ENCODE measurements at regions of chr11 and their contacts with region 1.

Region 1: DNA sequence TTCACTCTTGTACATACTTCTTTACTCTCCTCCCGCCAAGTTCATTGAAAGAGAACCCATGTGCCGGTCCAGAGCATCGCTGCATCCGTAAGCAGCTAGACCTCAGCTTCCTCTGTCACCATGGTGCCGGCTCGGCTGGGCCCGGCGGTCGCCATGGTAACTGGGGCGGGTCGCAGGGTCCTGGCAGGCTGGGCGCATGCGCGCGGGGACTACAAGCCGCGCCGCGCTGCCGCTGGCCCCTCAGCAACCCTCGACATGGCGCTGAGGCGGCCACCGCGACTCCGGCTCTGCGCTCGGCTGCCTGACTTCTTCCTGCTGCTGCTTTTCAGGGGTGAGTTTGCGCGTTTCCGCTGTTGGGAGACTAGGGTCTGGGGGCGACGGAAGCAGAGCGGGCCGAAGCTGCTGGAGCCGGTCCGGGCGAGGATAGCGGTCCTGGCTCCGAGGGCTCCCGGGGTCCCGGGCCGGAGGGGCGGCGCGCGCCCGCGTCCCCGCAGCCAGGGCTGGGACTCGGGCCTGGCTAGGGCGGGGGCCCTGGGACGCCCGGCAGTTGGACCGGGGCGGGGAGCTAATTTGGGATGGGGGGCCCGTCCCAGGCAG is at the start of gene JAM3:
- DNase-seq: peak; percentile 98
- ATAC-seq: peak; percentile 96
- H3K4me3 Mint-ChIP-seq: peak within 1 kb of the TSS; percentile 93
- H3K27ac Mint-ChIP-seq: peak within 1 kb of the TSS; percentile 83
- H3K4me1 Mint-ChIP-seq: peaks cover 22% of the 10 kb centered on the region
- H3K27me3 Mint-ChIP-seq: peaks cover 9% of the 10 kb centered on the region
- total RNA-seq, gene JAM3: 15.3 to 17.5 TPM

Region 2: DNA sequence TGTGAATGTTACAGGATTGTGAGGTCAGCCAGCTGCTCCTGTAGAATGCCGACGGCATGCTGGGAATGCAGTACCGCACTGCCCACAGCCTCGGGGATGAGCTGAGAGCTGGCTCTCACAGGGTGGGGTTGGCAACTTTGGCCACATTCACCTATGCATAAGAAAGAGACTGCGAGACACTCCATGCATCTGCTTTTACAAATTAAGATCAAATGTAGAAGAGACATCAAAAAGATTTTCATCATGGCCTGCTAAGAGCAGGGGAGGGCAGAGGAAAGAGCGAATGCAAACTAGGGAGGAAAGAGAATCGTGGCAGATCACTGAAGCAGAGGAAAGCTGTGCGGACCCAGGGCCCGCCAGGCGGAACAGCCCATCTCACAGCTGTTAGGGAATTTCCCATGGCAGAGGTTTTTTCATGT is 173.9 kb before region 1 on chr11:
- CTCF ChIA-PET with region 1: no interaction called
- POLR2A ChIA-PET with region 1: no interaction called
- intact Hi-C with region 1: no loop called
- DNase-seq: no peak
- ATAC-seq: no peak
- H3K4me3 Mint-ChIP-seq: no peak overlapping the region
- H3K27ac Mint-ChIP-seq: no peak overlapping the region
- H3K4me1 Mint-ChIP-seq: peaks cover 2% of the 10 kb centered on the region
- H3K27me3 Mint-ChIP-seq: peaks cover 7% of the 10 kb centered on the region

Region 3: DNA sequence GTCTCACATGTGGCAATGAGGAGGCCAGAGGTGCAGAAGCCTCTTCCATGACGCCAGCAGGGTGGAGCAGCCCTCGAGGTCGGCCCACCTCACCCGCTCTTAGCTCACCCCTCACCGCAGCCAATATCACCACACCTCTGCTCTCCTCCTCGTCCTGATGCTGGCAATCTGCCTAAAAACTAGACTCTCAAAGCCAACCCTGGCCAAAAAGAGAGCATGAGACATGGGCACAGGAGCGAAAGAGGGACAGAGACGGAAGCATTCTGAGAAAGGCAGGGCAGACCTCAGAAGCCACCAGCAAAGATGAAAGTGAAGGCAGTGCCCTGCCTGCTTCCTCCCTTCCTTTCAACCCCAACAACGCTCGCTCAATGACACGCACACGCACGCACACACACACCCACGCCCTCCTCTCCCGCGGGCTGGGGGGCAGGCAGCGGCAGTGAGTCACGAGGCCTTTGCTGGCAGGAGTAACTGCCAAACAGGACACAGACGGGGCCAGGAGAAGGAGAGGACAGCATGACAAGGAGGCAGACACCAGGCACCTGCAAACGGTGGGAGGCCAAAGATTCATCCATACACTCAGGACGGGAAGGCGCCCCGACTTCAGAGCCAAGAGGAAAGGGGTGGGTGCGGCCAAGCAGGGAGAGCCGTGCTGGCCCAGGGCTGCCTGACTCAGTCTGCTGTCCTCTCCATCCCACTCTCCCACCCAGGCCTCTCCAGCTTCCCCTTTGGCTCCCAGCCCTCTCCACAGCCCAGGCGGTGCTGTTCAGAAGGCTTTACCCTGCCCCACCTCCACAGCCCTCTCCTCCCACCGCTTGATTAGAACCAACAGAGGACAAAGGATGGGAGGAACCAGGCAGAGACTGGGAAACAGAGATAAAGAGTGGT is 123.6 kb before region 1 on chr11:
- CTCF ChIA-PET with region 1: no interaction called
- POLR2A ChIA-PET with region 1: no interaction called
- intact Hi-C with region 1: no loop called
- DNase-seq: peak; percentile 95
- ATAC-seq: peak; percentile 78
- H3K4me3 Mint-ChIP-seq: peak overlapping the region; percentile 79
- H3K27ac Mint-ChIP-seq: peak overlapping the region; percentile 96
- H3K4me1 Mint-ChIP-seq: peaks cover 74% of the 10 kb centered on the region
- H3K27me3 Mint-ChIP-seq: no peaks in the 10 kb centered on the region

Region 4: DNA sequence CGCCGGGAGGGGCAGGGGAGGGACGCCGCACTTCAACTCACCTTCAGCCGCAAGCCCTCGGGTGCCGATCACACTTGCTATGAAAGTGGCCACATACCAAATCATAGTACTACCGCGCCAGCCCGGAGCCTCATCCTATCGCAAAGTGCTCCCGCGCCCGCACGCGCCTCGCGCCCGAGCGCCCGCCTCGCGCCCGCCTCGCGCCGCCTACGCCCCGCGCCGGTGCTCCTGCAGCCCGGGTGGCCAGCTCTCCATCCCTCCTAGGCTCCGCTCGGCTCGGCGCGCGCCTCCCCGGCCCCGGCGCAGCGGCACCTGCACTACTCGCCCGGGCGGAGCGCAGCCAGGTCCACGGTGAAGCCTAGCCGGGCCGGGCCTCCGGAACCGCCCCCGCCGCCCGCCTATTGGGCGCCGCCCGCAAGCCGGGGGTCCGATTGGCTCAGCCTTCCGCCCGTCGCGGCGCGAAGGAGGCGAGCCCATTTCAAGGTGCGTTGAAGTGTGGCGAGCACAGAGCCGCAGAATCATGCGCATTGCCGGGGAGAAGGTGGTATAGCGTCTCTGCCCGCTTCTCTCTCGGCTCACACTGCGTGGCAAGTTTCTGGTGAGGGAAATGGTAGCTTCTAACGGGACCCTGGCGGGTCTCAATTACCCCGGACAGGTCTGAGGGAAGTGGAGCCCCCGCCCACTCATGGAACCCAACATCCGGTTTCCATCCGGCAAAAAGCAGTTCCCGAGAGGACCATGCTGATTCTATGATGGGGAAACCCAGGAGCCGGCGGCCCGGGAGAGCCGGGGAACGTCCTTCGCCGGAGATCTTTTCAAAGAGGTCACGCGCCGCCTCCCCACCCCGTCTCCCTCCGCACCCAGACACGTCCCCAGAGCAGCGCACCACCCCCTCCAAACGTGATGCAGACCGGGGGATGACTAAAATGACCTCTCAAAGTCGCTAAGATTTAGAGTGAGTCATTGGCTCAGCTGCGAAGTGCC is 112.0 kb before region 1 on chr11 and contains the start of gene IGSF9B:
- CTCF ChIA-PET with region 1: interaction called, 3 read pairs
- POLR2A ChIA-PET with region 1: no interaction called
- intact Hi-C with region 1: loop called in 1 of 2 experiments (anchors 1 kb)
- DNase-seq: peak; percentile 95
- ATAC-seq: peak; percentile 91
- H3K4me3 Mint-ChIP-seq: peak within 1 kb of the TSS; percentile 90
- H3K27ac Mint-ChIP-seq: peak within 1 kb of the TSS; percentile 87
- H3K4me1 Mint-ChIP-seq: peaks cover 49% of the 10 kb centered on the region
- H3K27me3 Mint-ChIP-seq: peaks cover 9% of the 10 kb centered on the region
- total RNA-seq, gene IGSF9B: 79.0 to 84.2 TPM

Region 5: DNA sequence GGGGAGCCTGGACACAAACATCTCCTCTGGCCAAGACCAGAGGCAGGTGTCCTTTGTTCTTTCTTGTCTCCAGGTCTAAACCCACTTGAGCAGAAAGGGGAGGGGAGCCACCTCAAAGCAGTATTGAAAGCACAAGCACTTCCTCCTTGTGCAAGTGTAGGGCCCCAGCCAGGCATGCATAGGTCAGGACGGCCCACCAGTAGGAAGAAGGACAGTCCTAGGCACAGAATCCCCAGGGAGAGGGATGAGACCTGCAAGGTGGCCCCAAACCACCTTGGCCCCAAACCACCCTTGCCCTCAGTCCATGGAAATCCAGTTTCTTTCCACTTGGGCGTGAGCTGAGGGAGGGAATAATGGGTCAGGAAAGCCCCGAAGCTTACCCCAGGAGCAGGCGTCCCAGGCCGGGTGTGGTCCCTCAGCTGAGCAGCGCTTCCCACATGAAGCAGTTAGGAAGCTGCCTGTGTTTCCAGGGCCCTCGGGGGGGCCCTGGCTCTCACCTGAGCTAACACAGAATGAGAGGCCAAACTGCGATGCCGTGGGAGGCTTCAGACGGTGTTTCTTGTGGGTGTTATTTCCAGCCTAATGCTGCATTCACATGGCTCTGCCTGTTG is 91.8 kb before region 1 on chr11:
- CTCF ChIA-PET with region 1: no interaction called
- POLR2A ChIA-PET with region 1: no interaction called
- intact Hi-C with region 1: no loop called
- DNase-seq: no peak
- ATAC-seq: peak; percentile 65
- H3K4me3 Mint-ChIP-seq: no peak overlapping the region
- H3K27ac Mint-ChIP-seq: no peak overlapping the region
- H3K4me1 Mint-ChIP-seq: no peaks in the 10 kb centered on the region
- H3K27me3 Mint-ChIP-seq: peaks cover 8% of the 10 kb centered on the region

Region 6: DNA sequence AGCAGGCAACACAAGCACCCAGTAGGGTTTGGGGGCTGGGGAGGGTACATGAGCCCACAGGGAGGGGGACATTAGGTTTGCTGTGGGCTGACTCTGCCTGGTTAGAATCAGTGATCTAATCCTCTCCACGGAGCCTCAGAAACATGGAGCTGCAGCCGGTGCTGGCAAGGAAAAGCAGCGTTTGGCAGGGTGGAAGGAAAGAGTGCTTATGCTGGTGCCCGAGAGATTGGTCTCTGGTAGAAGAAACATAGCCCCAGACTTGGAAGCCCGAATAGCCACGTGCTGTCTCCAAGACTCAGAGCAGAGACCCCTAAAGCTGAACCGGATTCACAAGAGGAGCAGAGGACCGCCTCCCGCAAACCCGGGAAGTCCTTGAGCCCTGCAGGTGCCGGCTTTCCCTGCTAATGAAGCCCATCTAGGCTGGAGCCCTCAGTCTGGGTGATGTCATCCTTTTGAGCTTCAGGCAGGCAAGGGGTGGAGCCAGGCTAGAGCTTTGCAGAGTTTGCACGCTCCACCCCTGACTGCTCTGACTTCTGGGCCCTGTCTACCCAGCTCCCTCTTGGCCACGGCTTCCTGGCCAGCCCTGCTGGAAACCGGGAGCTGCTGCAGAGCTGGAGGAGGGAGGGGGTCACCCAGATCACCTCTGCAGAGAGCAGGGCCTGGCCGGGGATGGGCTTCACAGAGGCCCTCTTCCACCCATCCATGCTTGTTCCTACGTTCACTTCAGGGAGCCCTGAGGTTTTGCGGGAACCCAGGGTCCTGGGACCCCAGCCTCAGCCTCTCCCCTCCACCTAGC is 35.0 kb before region 1 on chr11:
- CTCF ChIA-PET with region 1: interaction called, 4 read pairs
- POLR2A ChIA-PET with region 1: no interaction called
- intact Hi-C with region 1: loop called in 1 of 2 experiments (anchors 2 kb)
- DNase-seq: peak; percentile 84
- ATAC-seq: peak; percentile 91
- H3K4me3 Mint-ChIP-seq: no peak overlapping the region
- H3K27ac Mint-ChIP-seq: peak overlapping the region; percentile 7
- H3K4me1 Mint-ChIP-seq: peaks cover 54% of the 10 kb centered on the region
- H3K27me3 Mint-ChIP-seq: peaks cover 4% of the 10 kb centered on the region

Region 7: DNA sequence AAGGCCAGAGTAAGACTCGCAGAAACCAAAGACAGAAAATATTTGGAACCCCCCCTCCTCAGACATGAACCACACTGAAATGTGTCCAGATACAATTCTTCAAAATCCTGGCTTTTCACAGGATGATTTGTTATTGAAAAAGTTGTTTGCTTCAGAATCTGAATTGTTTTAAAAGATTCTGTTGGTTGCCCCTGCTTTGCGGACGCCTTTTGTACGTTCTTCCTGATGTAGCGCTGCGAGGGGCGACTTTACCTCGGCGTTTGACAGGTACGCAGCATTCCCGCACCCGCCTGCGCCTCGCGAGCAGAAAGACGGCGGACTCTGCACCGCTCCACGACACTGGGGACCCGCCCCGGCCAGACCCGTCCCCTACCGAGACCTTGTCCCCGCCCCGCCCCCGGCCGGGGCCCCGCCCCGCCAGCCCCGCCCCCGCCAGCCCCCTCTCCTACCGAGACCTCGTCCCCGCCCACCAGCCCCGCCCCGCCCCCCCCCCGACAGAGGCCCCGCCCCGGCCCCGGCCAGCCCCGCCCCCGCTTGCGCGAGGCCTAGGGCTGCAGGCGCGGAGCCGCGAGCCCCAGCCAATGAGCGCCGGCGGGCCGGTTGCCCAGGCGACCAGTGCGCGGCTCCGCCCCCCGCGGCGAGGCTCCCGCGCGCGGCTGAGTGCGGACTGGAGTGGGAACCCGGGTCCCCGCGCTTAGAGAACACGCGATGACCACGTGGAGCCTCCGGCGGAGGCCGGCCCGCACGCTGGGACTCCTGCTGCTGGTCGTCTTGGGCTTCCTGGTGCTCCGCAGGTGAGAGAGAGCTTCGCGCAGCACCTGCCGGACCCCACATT is 262.6 kb after region 1 on chr11 and contains the start of gene GLB1L2:
- CTCF ChIA-PET with region 1: no interaction called
- POLR2A ChIA-PET with region 1: no interaction called
- intact Hi-C with region 1: loop called in 1 of 2 experiments (anchors 1 kb)
- DNase-seq: peak; percentile 86
- ATAC-seq: peak; percentile 99
- H3K4me3 Mint-ChIP-seq: peak within 1 kb of the TSS; percentile 75
- H3K27ac Mint-ChIP-seq: peak within 1 kb of the TSS; percentile 64
- H3K4me1 Mint-ChIP-seq: peaks cover 12% of the 10 kb centered on the region
- H3K27me3 Mint-ChIP-seq: peaks cover 23% of the 10 kb centered on the region
- total RNA-seq, gene GLB1L2: 3.9 to 4.2 TPM